ENCODE measurements at regions of chr11 and their contacts with region 1.

Region 1: GRCh38 chr11:70647188-70648166 is 249.1 kb downstream of the CTTN start:
- DNase-seq: no peak

Region 2: GRCh38 chr11:70568038-70568813 is 79.3 kb before region 1 on chr11:
- in situ Hi-C with region 1: loop called (anchors 5 kb)
- DNase-seq: peak; percentile 83

Region 3: GRCh38 chr11:70688142-70688541 is 40.7 kb after region 1 on chr11:
- in situ Hi-C with region 1: loop called (anchors 5 kb)
- DNase-seq: no peak